IMR-90 (cell line): ENCODE measurements at regions of chr11 and their contacts with region 1.

Region 1: DNA sequence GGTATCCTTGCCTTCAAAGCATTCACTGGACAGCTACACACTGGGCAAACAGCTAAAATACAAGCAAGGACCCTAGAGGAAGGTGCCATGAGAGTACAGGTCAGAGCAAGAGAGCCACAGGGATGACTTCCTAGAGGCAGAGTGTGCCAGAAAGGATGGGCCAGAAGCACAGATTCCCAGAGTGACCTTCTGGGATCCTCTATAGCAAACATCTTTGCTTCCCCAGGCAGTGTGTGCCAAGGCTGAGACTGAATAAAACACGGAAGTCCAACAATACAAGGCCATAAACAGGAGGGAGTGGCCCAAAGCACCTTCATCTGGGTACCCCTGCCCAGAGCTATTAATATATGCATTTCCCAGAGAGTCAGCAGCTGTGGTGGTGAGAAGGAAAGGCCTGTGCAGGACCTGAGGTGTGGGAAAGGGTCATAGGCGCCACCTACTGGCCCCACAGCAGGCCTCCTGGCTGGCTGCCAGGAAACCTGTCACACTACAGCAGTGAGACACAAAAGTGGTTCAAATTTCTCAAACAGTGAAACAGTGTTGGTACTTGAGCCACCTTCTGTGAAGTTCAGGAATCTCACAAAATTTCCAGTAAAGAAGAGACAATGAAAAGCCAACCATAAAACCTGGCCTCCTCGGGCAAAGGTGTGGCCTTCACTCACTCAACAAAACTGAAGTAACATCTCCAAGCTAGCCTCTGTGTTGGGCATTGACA is 20.3 kb downstream of the CLPB start:
- DNase-seq: peak; percentile 76
- ATAC-seq: peak; percentile 90
- H3K4me3 ChIP-seq: no peak overlapping the region
- H3K27ac ChIP-seq: no peak overlapping the region
- H3K4me1 ChIP-seq: peaks cover 4% of the 10 kb centered on the region; the same call in 1 of the 2 replicates
- H3K27me3 ChIP-seq: no peaks in the 10 kb centered on the region
- CTCF ChIP-seq: peak; percentile 87
- POLR2A ChIP-seq: no peak
- RAD21 ChIP-seq: peak; percentile 84

Region 2: GRCh38 chr11:72244361-72245262 is 169.5 kb before region 1 on chr11:
- CTCF ChIA-PET with region 1: no interaction called
- POLR2A ChIA-PET with region 1: no interaction called
- dilution Hi-C with region 1: no loop called
- in situ Hi-C with region 1: no loop called
- intact Hi-C with region 1: no loop called
- DNase-seq: no peak
- ATAC-seq: no peak; the same call in 1 of the 2 replicates
- H3K4me3 ChIP-seq: 0 out of 2 replicates have a peak overlapping the region, but pooled peaks have one; percentile 20
- H3K27ac ChIP-seq: no peak overlapping the region
- H3K4me1 ChIP-seq: no peaks in the 10 kb centered on the region; the same call in 1 of the 2 replicates
- H3K27me3 ChIP-seq: peaks cover 84% of the 10 kb centered on the region
- CTCF ChIP-seq: no peak
- POLR2A ChIP-seq: no peak
- RAD21 ChIP-seq: no peak

Region 3: DNA sequence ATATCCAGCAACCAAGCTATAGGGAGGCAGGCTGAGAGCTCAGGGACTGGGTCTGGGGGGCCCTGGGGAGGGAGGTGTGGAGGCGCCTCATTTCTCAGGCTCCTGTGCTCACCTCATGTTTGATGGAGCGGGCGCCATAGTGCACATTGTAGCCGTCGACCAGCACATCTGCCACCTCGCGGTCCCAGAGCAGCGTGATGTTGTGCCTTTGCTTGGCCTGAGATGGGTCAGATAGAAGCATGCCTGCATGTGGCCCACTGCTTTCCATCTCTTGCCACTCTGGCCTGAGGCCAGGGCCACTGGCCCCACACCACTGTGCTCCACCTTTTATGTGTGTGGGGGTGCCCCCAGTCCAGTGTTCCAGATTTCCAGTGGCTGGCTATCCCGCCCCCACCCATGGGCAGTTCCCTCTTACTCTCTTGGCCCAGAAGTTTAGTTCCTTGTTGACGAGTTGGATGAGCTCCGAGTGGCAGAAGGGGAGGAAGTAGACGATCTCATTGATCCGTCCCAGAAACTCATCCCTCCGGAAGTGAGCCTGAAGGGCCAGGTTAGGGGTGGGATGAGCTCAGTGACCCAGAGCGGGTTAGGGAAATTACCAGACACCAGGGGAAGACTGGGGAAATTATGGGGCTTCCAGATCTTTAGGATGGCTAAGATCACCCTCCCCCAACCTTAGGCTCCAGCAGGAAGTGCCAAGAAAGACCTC is 120.0 kb before region 1 on chr11:
- CTCF ChIA-PET with region 1: no interaction called
- POLR2A ChIA-PET with region 1: no interaction called
- dilution Hi-C with region 1: no loop called
- in situ Hi-C with region 1: no loop called
- intact Hi-C with region 1: loop called (anchors 2 kb)
- DNase-seq: no peak
- ATAC-seq: no peak
- H3K4me3 ChIP-seq: no peak overlapping the region
- H3K27ac ChIP-seq: no peak overlapping the region
- H3K4me1 ChIP-seq: no peaks in the 10 kb centered on the region
- H3K27me3 ChIP-seq: no peaks in the 10 kb centered on the region
- CTCF ChIP-seq: no peak
- POLR2A ChIP-seq: no peak
- RAD21 ChIP-seq: no peak

Region 4: DNA sequence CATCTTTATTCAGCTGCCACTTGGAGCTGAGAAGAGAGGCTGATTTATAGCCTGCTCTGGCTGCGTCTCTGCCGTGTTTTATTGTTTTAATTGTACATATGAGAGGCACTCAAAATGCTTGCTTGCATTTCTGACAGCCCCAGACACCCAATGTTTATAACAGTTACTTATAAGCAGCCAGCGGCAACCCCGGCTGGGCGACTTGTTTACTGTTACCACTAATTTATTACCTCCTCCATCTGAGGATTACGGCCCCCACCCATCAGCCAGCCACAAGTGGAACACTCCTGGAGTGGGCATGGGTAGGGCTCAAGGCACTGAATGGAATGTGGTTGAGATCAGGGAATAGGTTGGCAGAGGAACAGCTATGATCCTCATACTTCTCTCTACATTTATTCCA is 40.9 kb before region 1 on chr11:
- CTCF ChIA-PET with region 1: no interaction called
- POLR2A ChIA-PET with region 1: no interaction called
- dilution Hi-C with region 1: no loop called
- in situ Hi-C with region 1: no loop called
- intact Hi-C with region 1: no loop called
- DNase-seq: no peak
- ATAC-seq: peak; percentile 44
- H3K4me3 ChIP-seq: no peak overlapping the region
- H3K27ac ChIP-seq: no peak overlapping the region
- H3K4me1 ChIP-seq: peaks cover 2% of the 10 kb centered on the region; the same call in 1 of the 2 replicates
- H3K27me3 ChIP-seq: no peaks in the 10 kb centered on the region
- CTCF ChIP-seq: no peak
- POLR2A ChIP-seq: no peak
- RAD21 ChIP-seq: no peak